ENCODE measurements at regions of chr2 and their contacts with region 1.

Region 1: GRCh38 chr2:63438181-63438580 is 150.1 kb downstream of the WDPCP start:
- DNase-seq: no peak
- ATAC-seq: no peak
- H3K4me3 Mint-ChIP-seq: no peak overlapping the region
- H3K27ac Mint-ChIP-seq: no peak overlapping the region
- H3K4me1 Mint-ChIP-seq: no peaks in the 10 kb centered on the region
- H3K27me3 Mint-ChIP-seq: no peaks in the 10 kb centered on the region

Region 2: DNA sequence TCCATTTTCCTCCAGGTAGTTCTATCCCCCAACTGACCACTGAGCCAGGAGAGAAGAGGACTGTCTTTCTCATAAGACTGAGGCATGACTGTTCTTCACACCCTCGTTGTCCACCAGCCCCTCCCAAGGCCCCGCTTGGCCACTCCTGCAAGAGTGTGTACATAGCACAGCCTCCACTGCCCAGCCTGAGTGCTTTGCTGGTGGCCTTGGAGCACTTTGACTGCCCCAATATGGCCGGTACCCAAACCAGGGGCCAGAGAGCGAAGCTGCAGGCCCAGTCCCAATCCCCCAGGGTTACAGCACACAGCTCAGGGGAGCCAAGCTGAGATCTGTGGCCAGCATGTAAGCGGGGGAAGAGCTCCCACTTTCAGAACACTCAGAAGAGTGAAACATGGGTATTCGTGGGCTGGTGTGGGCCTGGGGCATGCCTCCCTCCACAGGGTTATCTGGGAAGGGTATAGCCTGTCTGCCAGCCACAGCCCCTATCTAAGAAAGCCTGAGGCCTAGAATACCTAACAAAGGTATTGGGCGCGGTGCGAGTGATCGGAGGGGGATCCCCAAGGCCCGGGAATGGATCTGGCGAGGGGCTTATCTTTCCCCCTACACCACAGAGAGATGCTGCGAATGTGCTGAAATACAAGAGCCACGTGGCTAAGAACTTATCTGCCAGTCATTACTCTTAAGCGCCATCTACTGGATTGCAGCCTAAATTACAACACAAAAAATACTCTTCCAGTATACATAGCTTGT is 13.7 kb before region 1 on chr2:
- CTCF ChIA-PET with region 1: interaction called, 13 read pairs
- DNase-seq: no peak
- ATAC-seq: peak; percentile 83
- H3K4me3 Mint-ChIP-seq: no peak overlapping the region
- H3K27ac Mint-ChIP-seq: no peak overlapping the region
- H3K4me1 Mint-ChIP-seq: peaks cover 5% of the 10 kb centered on the region
- H3K27me3 Mint-ChIP-seq: no peaks in the 10 kb centered on the region

Region 3: DNA sequence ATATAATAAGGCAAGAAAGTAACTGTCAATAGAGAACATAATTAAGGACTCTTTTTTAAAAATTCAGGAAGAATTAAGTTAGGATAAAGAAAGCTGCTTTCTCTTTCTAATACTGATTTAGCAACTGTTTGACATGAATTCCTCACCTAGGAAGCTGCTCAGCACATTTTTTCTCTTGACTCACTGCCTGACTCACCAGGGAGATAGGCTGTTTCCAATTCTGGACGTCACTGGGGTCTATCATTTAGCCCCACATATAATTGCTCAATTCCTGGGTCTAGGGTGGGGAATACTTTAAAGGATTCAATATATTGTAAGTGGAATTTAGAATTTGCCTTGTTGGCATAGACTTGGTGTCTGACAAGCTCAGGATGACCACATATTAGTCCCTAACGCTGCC is 352.7 kb after region 1 on chr2:
- CTCF ChIA-PET with region 1: no interaction called
- DNase-seq: no peak
- ATAC-seq: no peak
- H3K4me3 Mint-ChIP-seq: no peak overlapping the region
- H3K27ac Mint-ChIP-seq: no peak overlapping the region
- H3K4me1 Mint-ChIP-seq: peaks cover 5% of the 10 kb centered on the region
- H3K27me3 Mint-ChIP-seq: no peaks in the 10 kb centered on the region

Measured in activated CD8-positive, alpha-beta memory T cell treated with anti-CD3 and anti-CD28 coated beads, Interleukin-2, amount 10 ng/mL, durations not matched to agents 7 days and 5 days (primary cell).